Activated CD8-positive, alpha-beta T cell treated with anti-CD3 and anti-CD28 coated beads for 36 hours (primary cell): ENCODE measurements at regions of chr14 and their contacts with region 1.

Region 1: GRCh38 chr14:66359500-66359899 is 126.7 kb upstream of the CCDC196 start:
- DNase-seq: peak; percentile 7
- ATAC-seq: peak; percentile 37
- H3K4me3 Mint-ChIP-seq: no peak overlapping the region
- H3K27ac Mint-ChIP-seq: no peak overlapping the region
- H3K4me1 Mint-ChIP-seq: no peaks in the 10 kb centered on the region
- H3K27me3 Mint-ChIP-seq: no peaks in the 10 kb centered on the region
- CTCF ChIP-seq: peak; percentile 80

Region 2: DNA sequence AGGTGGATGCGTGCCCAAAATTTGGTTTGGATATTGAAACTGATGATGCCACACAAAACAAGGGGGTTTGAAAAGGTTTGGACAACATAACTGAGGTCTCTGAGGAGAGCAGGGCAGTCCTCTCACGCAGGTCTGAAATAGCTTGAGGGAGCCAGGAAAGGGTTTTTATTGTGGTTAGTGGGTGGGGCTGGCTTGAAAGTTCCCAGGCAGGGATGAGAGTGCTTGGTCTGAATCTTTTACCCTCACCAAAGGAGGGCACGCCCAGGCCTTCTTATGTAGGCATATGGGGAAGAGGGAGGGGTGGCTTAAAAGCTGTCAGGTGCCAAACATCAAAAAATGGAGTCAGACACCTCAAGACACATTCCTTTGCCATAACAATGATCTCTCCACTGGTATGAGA is 366.4 kb before region 1 on chr14:
- CTCF ChIA-PET with region 1: no interaction called
- POLR2A ChIA-PET with region 1: no interaction called
- intact Hi-C with region 1: no loop called
- DNase-seq: no peak
- ATAC-seq: no peak
- H3K4me3 Mint-ChIP-seq: no peak overlapping the region
- H3K27ac Mint-ChIP-seq: no peak overlapping the region
- H3K4me1 Mint-ChIP-seq: peaks cover 18% of the 10 kb centered on the region
- H3K27me3 Mint-ChIP-seq: no peaks in the 10 kb centered on the region
- CTCF ChIP-seq: no peak

Region 3: DNA sequence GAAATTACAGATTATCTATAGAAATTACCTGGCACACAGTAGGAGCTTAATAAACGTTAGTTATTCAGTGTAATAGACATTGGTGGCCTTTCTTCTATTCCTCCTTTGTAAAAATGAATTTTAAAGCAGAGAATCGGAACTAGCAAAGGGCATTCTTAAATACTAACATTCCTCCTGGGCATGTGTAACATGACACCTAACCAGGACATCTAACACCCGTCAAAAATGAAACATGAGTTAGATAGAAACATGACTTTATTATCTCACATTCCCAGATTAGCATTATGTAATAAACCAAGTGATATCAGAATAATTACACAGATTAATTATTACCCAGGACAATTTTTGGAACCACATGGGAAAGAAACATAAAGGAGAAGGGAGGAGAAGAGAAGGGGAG is 17.1 kb before region 1 on chr14:
- CTCF ChIA-PET with region 1: interaction called, 10 read pairs
- POLR2A ChIA-PET with region 1: no interaction called
- intact Hi-C with region 1: no loop called
- DNase-seq: no peak
- ATAC-seq: no peak
- H3K4me3 Mint-ChIP-seq: no peak overlapping the region
- H3K27ac Mint-ChIP-seq: no peak overlapping the region
- H3K4me1 Mint-ChIP-seq: no peaks in the 10 kb centered on the region
- H3K27me3 Mint-ChIP-seq: no peaks in the 10 kb centered on the region
- CTCF ChIP-seq: no peak

Region 4: GRCh38 chr14:66378712-66379505 is 19.4 kb after region 1 on chr14:
- CTCF ChIA-PET with region 1: interaction called, 14 read pairs
- POLR2A ChIA-PET with region 1: no interaction called
- intact Hi-C with region 1: no loop called
- DNase-seq: no peak
- ATAC-seq: no peak
- H3K4me3 Mint-ChIP-seq: no peak overlapping the region
- H3K27ac Mint-ChIP-seq: no peak overlapping the region
- H3K4me1 Mint-ChIP-seq: no peaks in the 10 kb centered on the region
- H3K27me3 Mint-ChIP-seq: no peaks in the 10 kb centered on the region
- CTCF ChIP-seq: no peak

Region 5: GRCh38 chr14:66395300-66395699 is 35.8 kb after region 1 on chr14:
- CTCF ChIA-PET with region 1: interaction called, 40 read pairs
- POLR2A ChIA-PET with region 1: no interaction called
- intact Hi-C with region 1: no loop called
- DNase-seq: peak; percentile 58
- ATAC-seq: peak; percentile 87
- H3K4me3 Mint-ChIP-seq: no peak overlapping the region
- H3K27ac Mint-ChIP-seq: no peak overlapping the region
- H3K4me1 Mint-ChIP-seq: peaks cover 13% of the 10 kb centered on the region
- H3K27me3 Mint-ChIP-seq: no peaks in the 10 kb centered on the region
- CTCF ChIP-seq: no peak

Region 6: DNA sequence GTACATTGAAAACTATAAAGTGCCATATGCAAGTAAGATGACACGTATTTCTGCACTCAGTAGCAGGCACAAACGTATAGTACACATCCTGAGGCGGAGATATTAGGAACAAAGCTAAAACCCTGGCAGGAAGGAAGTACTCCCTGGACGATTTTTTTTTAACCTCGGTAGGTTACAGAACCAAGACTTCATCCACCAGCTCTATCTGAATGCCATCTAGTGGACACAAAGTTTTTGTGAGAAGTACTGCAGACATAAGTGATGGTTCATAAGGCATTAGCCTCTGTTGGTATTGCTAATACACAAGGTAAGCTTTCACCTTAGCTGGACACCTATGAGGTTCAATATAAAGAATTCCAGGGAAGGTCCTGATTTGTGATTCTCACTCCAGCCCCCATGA is 43.7 kb after region 1 on chr14:
- CTCF ChIA-PET with region 1: interaction called, 38 read pairs
- POLR2A ChIA-PET with region 1: no interaction called
- intact Hi-C with region 1: no loop called
- DNase-seq: no peak
- ATAC-seq: no peak
- H3K4me3 Mint-ChIP-seq: no peak overlapping the region
- H3K27ac Mint-ChIP-seq: no peak overlapping the region
- H3K4me1 Mint-ChIP-seq: peaks cover 10% of the 10 kb centered on the region
- H3K27me3 Mint-ChIP-seq: no peaks in the 10 kb centered on the region
- CTCF ChIP-seq: no peak

Region 7: DNA sequence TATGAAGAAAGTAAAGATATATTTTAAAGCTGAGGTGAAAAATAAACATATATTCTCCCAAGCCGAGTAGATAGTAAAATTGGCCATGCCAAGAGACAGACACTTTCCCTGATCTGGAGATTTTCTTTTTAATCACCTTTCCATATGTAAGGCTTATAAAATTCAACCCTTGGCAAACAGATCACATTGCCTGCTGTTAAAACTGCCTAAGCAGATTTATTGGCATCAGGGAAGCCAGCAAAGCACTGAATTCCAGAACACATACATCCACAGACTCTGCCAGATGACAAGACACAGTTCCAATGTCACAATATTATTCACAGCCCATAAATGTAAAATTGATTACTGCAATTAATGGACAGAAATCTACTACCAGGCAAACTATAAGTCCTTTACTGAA is 751.5 kb after region 1 on chr14:
- CTCF ChIA-PET with region 1: interaction called, 10 read pairs
- POLR2A ChIA-PET with region 1: no interaction called
- intact Hi-C with region 1: no loop called
- DNase-seq: no peak
- ATAC-seq: no peak
- H3K4me3 Mint-ChIP-seq: no peak overlapping the region
- H3K27ac Mint-ChIP-seq: no peak overlapping the region
- H3K4me1 Mint-ChIP-seq: no peaks in the 10 kb centered on the region
- H3K27me3 Mint-ChIP-seq: no peaks in the 10 kb centered on the region
- CTCF ChIP-seq: no peak